Ovary (tissue), 10 donors: ENCODE measurements at regions of chr20 and their contacts with region 1.

Region 1: GRCh38 chr20:46132705-46133120 is 14.6 kb downstream of the CD40 start:
- DNase-seq: peak; percentile 69 to 88 (median 73)
- H3K4me3 ChIP-seq: no peak overlapping the region
- H3K27ac ChIP-seq: no peak overlapping the region
- H3K4me1 ChIP-seq: peaks cover 5% of the 10 kb centered on the region
- H3K27me3 ChIP-seq: no peaks in the 10 kb centered on the region
- CTCF ChIP-seq: peak; percentile 57 to 81 (median 78)
- EP300 ChIP-seq: no peak
- POLR2A ChIP-seq: no peak

Region 2: GRCh38 chr20:46307139-46307998 is 174.7 kb after region 1 on chr20:
- intact Hi-C with region 1: loop called in 2 of 4 experiments (anchors 5 to 10 kb)
- DNase-seq: peak in 4 of 5 donors; percentile 22 to 49 (median 30)
- H3K4me3 ChIP-seq: peak overlapping the region; percentile 20
- H3K27ac ChIP-seq: no peak overlapping the region
- H3K4me1 ChIP-seq: no peaks in the 10 kb centered on the region
- H3K27me3 ChIP-seq: no peaks in the 10 kb centered on the region
- CTCF ChIP-seq: peak in 2 of 3 donors; percentile 16 to 19
- EP300 ChIP-seq: no peak
- POLR2A ChIP-seq: no peak

Region 3: GRCh38 chr20:46349035-46349741 is 216.5 kb after region 1 on chr20:
- intact Hi-C with region 1: loop called in 2 of 4 experiments (anchors 5 kb)
- DNase-seq: peak; percentile 32 to 76 (median 54)
- H3K4me3 ChIP-seq: no peak overlapping the region
- H3K27ac ChIP-seq: no peak overlapping the region
- H3K4me1 ChIP-seq: peaks cover 1% of the 10 kb centered on the region
- H3K27me3 ChIP-seq: no peaks in the 10 kb centered on the region
- CTCF ChIP-seq: peak in 2 of 3 donors; percentile 10 to 38
- EP300 ChIP-seq: no peak
- POLR2A ChIP-seq: no peak